ENCODE measurements at regions of chr22 and their contacts with region 1.

Region 1: GRCh38 chr22:42621505-42622002 is 6.9 kb upstream of the POLDIP3 start:
- DNase-seq: peak; percentile 88
- CTCF ChIP-seq: peak; percentile 90

Region 2: GRCh38 chr22:42635531-42635930 is 14.0 kb after region 1 on chr22:
- CTCF ChIA-PET with region 1: interaction called, 61 read pairs
- POLR2A ChIA-PET with region 1: interaction called, 4 read pairs
- DNase-seq: no peak
- CTCF ChIP-seq: no peak

Region 3: GRCh38 chr22:42662114-42663021 is 40.8 kb after region 1 on chr22:
- CTCF ChIA-PET with region 1: interaction called, 15 read pairs
- POLR2A ChIA-PET with region 1: no interaction called
- DNase-seq: peak; percentile 86
- CTCF ChIP-seq: peak; percentile 87

Region 4: DNA sequence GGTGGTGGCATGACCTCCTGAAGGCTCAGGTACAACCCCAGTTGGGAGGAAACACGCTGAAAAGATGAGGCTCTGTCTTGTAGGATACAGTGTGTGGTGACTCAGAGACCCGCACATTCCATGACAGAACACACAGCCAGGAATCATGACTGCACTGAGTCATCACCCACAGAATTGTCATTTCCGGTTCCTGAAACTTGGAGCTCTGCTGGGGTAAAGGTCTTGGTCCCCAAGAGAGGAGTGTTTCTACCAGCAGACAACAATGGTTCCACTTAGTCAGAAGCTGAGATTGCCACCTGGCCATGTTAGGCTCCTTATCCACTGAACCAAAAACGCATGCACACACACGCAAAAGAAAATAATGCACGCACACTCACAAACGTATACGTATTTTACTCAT is 59.1 kb after region 1 on chr22:
- CTCF ChIA-PET with region 1: no interaction called
- POLR2A ChIA-PET with region 1: no interaction called
- DNase-seq: no peak
- CTCF ChIP-seq: no peak

Measured in GM10248 (cell line).